Activated CD8-positive, alpha-beta T cell treated with anti-CD3 and anti-CD28 coated beads, Interleukin-2, amount 10 ng/mL, durations not matched to agents 7 days and 5 days (primary cell): ENCODE measurements at regions of chr7 and their contacts with region 1.

Region 1: DNA sequence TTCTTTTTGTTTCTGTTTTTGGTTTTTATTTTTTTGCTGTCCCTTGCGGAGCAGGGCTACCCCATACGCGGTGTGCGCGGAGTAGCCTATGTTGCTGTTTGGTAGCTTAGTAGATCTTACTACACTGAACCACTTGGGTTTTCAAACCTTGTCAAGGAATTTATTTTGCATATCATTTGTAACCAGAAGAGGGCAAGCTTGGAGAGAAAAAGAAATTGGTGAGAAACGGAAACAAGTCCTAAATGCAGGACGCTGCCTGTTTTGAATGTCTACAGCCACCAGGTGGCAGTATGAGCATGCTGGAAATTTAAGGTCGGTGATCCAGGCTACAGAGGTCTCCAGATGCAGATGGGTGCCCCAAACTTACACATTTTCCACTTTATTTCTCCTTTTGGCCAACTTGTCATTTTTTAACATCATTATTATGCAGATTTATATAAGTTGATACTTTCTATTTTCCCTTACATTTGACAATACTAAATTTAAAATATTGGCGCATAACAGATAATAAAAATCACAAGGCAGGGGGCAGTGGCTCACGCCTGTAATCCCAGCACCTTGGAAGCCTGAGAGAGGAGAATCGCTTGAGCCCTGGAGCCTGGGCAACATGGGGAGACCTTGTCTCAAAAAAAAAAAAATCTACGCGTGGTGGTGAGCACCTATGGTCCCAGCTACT is 15.3 kb upstream of the TRA2A start:
- DNase-seq: peak; percentile 86
- ATAC-seq: peak; percentile 82
- H3K4me3 Mint-ChIP-seq: no peak overlapping the region
- H3K27ac Mint-ChIP-seq: no peak overlapping the region
- H3K4me1 Mint-ChIP-seq: peaks cover 11% of the 10 kb centered on the region
- H3K27me3 Mint-ChIP-seq: peaks cover 2% of the 10 kb centered on the region

Region 2: GRCh38 chr7:23334482-23335056 is 212.5 kb before region 1 on chr7:
- CTCF ChIA-PET with region 1: no interaction called
- POLR2A ChIA-PET with region 1: no interaction called
- DNase-seq: no peak
- ATAC-seq: no peak
- H3K4me3 Mint-ChIP-seq: no peak overlapping the region
- H3K27ac Mint-ChIP-seq: no peak overlapping the region
- H3K4me1 Mint-ChIP-seq: no peaks in the 10 kb centered on the region
- H3K27me3 Mint-ChIP-seq: peaks cover 15% of the 10 kb centered on the region

Region 3: GRCh38 chr7:23357190-23358093 is 189.6 kb before region 1 on chr7:
- CTCF ChIA-PET with region 1: interaction called, 36 read pairs
- POLR2A ChIA-PET with region 1: no interaction called
- DNase-seq: no peak
- ATAC-seq: peak; percentile 26
- H3K4me3 Mint-ChIP-seq: no peak overlapping the region
- H3K27ac Mint-ChIP-seq: no peak overlapping the region
- H3K4me1 Mint-ChIP-seq: peaks cover 14% of the 10 kb centered on the region
- H3K27me3 Mint-ChIP-seq: peaks cover 12% of the 10 kb centered on the region

Region 4: GRCh38 chr7:23523486-23524075 is 23.5 kb before region 1 on chr7:
- CTCF ChIA-PET with region 1: interaction called, 22 read pairs
- POLR2A ChIA-PET with region 1: no interaction called
- DNase-seq: no peak
- ATAC-seq: no peak
- H3K4me3 Mint-ChIP-seq: no peak overlapping the region
- H3K27ac Mint-ChIP-seq: no peak overlapping the region
- H3K4me1 Mint-ChIP-seq: peaks cover 51% of the 10 kb centered on the region
- H3K27me3 Mint-ChIP-seq: no peaks in the 10 kb centered on the region

Region 5: GRCh38 chr7:23558303-23558702 is 11.3 kb after region 1 on chr7:
- CTCF ChIA-PET with region 1: interaction called, 10 read pairs
- POLR2A ChIA-PET with region 1: no interaction called
- DNase-seq: no peak
- ATAC-seq: no peak
- H3K4me3 Mint-ChIP-seq: no peak overlapping the region
- H3K27ac Mint-ChIP-seq: no peak overlapping the region
- H3K4me1 Mint-ChIP-seq: no peaks in the 10 kb centered on the region
- H3K27me3 Mint-ChIP-seq: peaks cover 17% of the 10 kb centered on the region

Region 6: DNA sequence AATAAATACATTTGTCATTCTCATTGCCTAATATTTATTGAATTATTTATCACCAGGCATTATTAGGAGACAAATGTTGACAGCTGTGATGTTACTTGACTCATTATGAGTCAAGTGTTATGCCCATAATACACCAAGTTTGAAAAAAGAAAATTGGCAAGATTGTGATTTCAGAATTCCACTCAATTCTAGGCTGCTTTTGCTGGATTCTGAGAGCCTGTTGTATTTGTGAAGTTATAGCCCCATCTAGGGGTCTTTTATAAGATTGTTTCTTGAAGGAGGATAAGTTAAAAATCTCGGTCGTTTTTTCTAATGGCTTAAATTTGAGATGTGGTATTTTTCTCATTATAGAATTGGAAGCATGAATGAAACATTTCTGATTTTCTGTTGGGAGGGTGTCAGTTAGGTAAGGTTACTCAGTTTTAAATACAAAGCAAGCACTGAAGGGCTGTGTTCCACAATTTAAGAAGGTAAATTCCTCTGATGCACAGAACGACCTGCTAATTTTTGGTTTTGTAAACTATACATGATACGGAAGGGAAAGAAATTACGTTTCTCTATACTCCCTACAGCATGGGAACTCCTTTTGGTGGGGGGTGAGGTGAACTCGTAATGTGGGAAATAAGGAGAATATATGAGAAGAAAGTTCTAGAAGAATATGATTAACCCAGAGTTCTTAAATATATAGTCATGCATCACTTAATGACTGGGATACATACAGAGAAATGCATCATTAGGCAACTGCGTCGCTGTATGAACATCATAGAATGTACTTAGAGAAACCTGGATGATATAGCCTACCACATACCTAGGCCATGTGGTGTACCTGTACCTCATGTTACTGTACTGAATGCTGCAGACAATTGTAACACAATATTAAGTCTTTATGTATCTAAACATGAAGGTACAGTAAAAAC is 165.6 kb after region 1 on chr7:
- CTCF ChIA-PET with region 1: interaction called, 42 read pairs
- POLR2A ChIA-PET with region 1: no interaction called
- DNase-seq: no peak
- ATAC-seq: no peak
- H3K4me3 Mint-ChIP-seq: no peak overlapping the region
- H3K27ac Mint-ChIP-seq: no peak overlapping the region
- H3K4me1 Mint-ChIP-seq: no peaks in the 10 kb centered on the region
- H3K27me3 Mint-ChIP-seq: no peaks in the 10 kb centered on the region